ENCODE measurements at regions of chr1 and their contacts with region 1.

Region 1: DNA sequence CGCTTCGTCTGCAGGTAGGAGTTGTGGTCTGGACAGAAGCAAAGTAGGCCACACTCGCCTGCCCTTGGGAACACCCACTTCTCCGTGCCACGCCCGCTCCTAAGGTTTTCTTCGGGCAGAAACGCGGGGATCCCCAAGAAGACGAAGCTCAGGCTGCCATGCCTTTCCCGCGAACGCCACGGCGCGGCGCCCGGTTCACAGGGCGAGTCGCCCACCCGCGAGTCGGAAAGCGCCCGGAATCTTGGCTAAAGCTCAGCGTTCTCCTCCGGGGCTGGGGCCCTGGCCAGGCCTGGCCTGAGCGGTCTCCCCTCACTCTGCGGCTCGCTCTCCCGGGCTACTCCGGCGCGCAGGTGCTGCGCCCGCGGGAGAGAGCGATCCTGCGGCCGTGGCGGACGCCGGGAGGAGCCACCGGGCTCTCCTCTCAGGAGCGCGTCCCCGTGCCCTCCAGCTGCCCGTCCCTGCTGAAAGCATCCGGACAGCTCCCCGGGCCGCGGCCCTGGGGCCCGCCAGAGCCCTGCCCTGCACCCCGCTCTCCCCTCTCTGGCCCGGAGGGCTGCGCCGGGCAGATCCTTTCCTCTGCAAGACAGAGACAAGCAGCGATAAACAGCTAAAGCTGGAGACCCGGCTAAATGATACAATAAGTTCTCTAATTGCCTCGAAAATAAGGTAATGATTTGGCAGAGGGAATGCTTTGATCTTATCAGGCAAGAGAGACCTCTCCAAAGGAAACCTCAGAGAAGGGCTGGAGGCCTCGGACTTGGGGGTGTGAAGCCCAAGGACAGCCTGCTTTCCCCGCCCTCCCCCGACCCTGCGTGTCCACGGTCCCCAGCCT is 6.7 kb upstream of the WNT2B start:
- DNase-seq: peak; percentile 70 to 83 (median 80)
- H3K4me3 ChIP-seq: peak overlapping the region in 2 of 4 donors; percentile 44 to 74
- H3K27ac ChIP-seq: peak overlapping the region in 2 of 5 donors; percentile 47 to 50
- H3K4me1 ChIP-seq: peaks cover 0 to 10% of the 10 kb centered on the region in 2 donors
- H3K27me3 ChIP-seq: no peaks in the 10 kb centered on the region
- CTCF ChIP-seq: peak; percentile 58 to 77 (median 68)
- POLR2A ChIP-seq: peak in 1 of 2 donors; percentile 8

Region 2: GRCh38 chr1:112619520-112620376 is 117.7 kb after region 1 on chr1 and contains the start of gene CAPZA1:
- intact Hi-C with region 1: loop called (anchors 5 to 10 kb)
- DNase-seq: peak; percentile 89 to 96 (median 92)
- H3K4me3 ChIP-seq: peak within 1 kb of the TSS; percentile 69 to 93 (median 88)
- H3K27ac ChIP-seq: peak within 1 kb of the TSS; percentile 95 to 99 (median 96)
- H3K4me1 ChIP-seq: peaks cover 17 to 51% of the 10 kb centered on the region in 2 donors
- H3K27me3 ChIP-seq: no peaks in the 10 kb centered on the region
- CTCF ChIP-seq: no peak
- POLR2A ChIP-seq: peak; percentile 71 to 81
- total RNA-seq, gene CAPZA1: 65.2 to 178 (median 96.5) TPM